ENCODE measurements at regions of chr1 and their contacts with region 1.

Region 1: GRCh38 chr1:235504496-235505222 is 407 bp upstream of the B3GALNT2 start:
- DNase-seq: peak; percentile 97 to 99 (median 98)
- ATAC-seq: peak; percentile 87
- H3K4me3 ChIP-seq: peak overlapping the region; percentile 81 to 85
- H3K4me3 Mint-ChIP-seq: peak overlapping the region; percentile 91
- H3K27ac ChIP-seq: peak overlapping the region; percentile 87 to 89
- H3K27ac Mint-ChIP-seq: peak overlapping the region; percentile 98
- H3K4me1 ChIP-seq: peaks cover 7% of the 10 kb centered on the region
- H3K4me1 Mint-ChIP-seq: peaks cover 26% of the 10 kb centered on the region
- H3K27me3 ChIP-seq: no peaks in the 10 kb centered on the region
- H3K27me3 Mint-ChIP-seq: no peaks in the 10 kb centered on the region
- CTCF ChIP-seq: peak; percentile 91

Region 2: GRCh38 chr1:234373064-234373958 is 1131.3 kb before region 1 on chr1 and contains the start of gene COA6:
- CTCF ChIA-PET with region 1: no interaction called
- POLR2A ChIA-PET with region 1: interaction called, 3 read pairs
- intact Hi-C with region 1: loop called (anchors 5 to 10 kb)
- DNase-seq: peak; percentile 82 to 96 (median 88)
- ATAC-seq: peak; percentile 84
- H3K4me3 ChIP-seq: peak within 1 kb of the TSS; percentile 82 to 97
- H3K4me3 Mint-ChIP-seq: peak within 1 kb of the TSS; percentile 97
- H3K27ac ChIP-seq: peak within 1 kb of the TSS; percentile 88 to 99
- H3K27ac Mint-ChIP-seq: peak within 1 kb of the TSS; percentile 99
- H3K4me1 ChIP-seq: peaks cover 19% of the 10 kb centered on the region
- H3K4me1 Mint-ChIP-seq: peaks cover 49% of the 10 kb centered on the region
- H3K27me3 ChIP-seq: no peaks in the 10 kb centered on the region
- H3K27me3 Mint-ChIP-seq: no peaks in the 10 kb centered on the region
- CTCF ChIP-seq: no peak
- total RNA-seq, gene COA6: 7.2 to 8.9 TPM

Region 3: GRCh38 chr1:234610348-234611152 is 894.1 kb before region 1 on chr1:
- CTCF ChIA-PET with region 1: no interaction called
- POLR2A ChIA-PET with region 1: interaction called, 3 read pairs
- intact Hi-C with region 1: loop called in 1 of 2 experiments (anchors 5 kb)
- DNase-seq: peak; percentile 78 to 98 (median 89)
- ATAC-seq: peak; percentile 42
- H3K4me3 ChIP-seq: peak overlapping the region; percentile 78 to 86
- H3K4me3 Mint-ChIP-seq: peak overlapping the region; percentile 92
- H3K27ac ChIP-seq: peak overlapping the region; percentile 97 to 99
- H3K27ac Mint-ChIP-seq: peak overlapping the region; percentile 98
- H3K4me1 ChIP-seq: peaks cover 46% of the 10 kb centered on the region
- H3K4me1 Mint-ChIP-seq: peaks cover 49% of the 10 kb centered on the region
- H3K27me3 ChIP-seq: no peaks in the 10 kb centered on the region
- H3K27me3 Mint-ChIP-seq: no peaks in the 10 kb centered on the region
- CTCF ChIP-seq: no peak

Region 4: DNA sequence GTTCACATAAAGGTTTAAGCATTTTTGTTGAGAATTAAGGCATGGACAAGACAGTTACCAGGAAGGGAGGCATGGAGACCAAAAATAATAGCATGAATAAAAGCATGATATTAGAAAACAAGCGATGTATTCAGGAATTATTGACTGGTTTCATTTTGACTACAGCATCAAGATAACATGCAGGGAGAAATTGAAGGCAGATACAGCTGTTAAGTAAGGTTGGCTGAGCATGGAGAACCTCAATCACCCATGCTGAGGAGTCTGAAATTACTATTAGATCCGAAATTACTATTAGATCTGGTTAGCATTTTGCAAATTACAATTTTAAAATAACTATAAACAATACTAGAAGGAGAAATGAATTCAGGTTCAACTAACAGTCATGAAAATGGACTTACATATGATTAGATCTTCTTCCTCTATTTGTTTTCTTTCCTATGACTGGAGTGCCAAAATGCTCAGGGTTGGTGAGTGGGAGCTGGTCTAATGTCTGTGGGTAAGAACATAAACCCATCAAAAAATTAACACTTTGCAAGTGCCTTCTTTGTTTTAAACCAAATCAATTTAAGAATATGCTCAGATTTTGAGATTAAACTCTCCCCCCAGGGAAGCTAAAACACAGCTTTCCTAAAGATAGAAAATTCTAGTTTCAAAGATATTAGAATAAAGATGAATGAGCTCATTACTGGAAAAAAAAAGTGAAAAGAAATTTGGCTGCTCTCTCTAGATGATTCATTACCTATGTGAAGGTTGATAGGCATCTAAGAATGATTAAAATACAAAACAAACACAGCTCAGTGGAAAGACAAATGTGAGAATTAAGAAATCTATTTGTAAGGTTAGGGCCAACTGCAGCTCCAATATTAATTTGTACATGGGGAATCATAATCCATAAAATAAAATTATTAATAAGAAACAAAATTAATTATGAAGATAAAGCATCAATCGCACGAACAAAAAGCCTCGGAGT is 258.4 kb before region 1 on chr1:
- CTCF ChIA-PET with region 1: no interaction called
- POLR2A ChIA-PET with region 1: no interaction called
- intact Hi-C with region 1: loop called in 1 of 2 experiments (anchors 5 kb)
- DNase-seq: no peak
- ATAC-seq: no peak
- H3K4me3 ChIP-seq: no peak overlapping the region
- H3K4me3 Mint-ChIP-seq: no peak overlapping the region
- H3K27ac ChIP-seq: no peak overlapping the region
- H3K27ac Mint-ChIP-seq: no peak overlapping the region
- H3K4me1 ChIP-seq: peaks cover 14% of the 10 kb centered on the region
- H3K4me1 Mint-ChIP-seq: peaks cover 42% of the 10 kb centered on the region
- H3K27me3 ChIP-seq: no peaks in the 10 kb centered on the region
- H3K27me3 Mint-ChIP-seq: no peaks in the 10 kb centered on the region
- CTCF ChIP-seq: no peak

Region 5: DNA sequence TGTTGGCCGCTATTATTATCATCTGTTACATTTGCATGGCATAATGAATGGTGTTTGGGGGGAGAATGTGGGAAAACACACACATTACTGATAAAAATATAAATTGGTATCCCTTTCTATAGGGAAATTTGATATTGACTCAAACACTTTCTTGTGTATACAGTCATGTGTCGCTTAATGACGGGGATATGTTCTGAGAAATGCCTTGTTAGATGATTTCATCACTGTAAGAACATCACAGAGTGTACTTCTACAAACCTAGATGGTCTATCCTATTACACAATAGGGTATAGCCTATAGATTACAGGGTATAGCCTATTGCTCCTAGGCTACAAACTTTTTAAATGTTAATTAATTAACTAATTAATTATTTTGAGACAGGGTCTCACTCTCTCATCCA is 66.8 kb after region 1 on chr1:
- CTCF ChIA-PET with region 1: no interaction called
- POLR2A ChIA-PET with region 1: no interaction called
- intact Hi-C with region 1: no loop called
- DNase-seq: no peak
- ATAC-seq: no peak
- H3K4me3 ChIP-seq: no peak overlapping the region
- H3K4me3 Mint-ChIP-seq: no peak overlapping the region
- H3K27ac ChIP-seq: no peak overlapping the region
- H3K27ac Mint-ChIP-seq: no peak overlapping the region
- H3K4me1 ChIP-seq: peaks cover 12% of the 10 kb centered on the region
- H3K4me1 Mint-ChIP-seq: peaks cover 14% of the 10 kb centered on the region
- H3K27me3 ChIP-seq: no peaks in the 10 kb centered on the region
- H3K27me3 Mint-ChIP-seq: no peaks in the 10 kb centered on the region
- CTCF ChIP-seq: no peak

Region 6: GRCh38 chr1:235642011-235642942 is 137.6 kb after region 1 on chr1:
- CTCF ChIA-PET with region 1: no interaction called
- POLR2A ChIA-PET with region 1: no interaction called
- intact Hi-C with region 1: loop called in 1 of 2 experiments (anchors 5 kb)
- DNase-seq: peak; percentile 45 to 91 (median 70)
- ATAC-seq: peak; percentile 82
- H3K4me3 ChIP-seq: peak overlapping the region; percentile 56 to 66
- H3K4me3 Mint-ChIP-seq: peak overlapping the region; percentile 80
- H3K27ac ChIP-seq: peak overlapping the region; percentile 69 to 77
- H3K27ac Mint-ChIP-seq: peak overlapping the region; percentile 92
- H3K4me1 ChIP-seq: peaks cover 16% of the 10 kb centered on the region
- H3K4me1 Mint-ChIP-seq: peaks cover 21% of the 10 kb centered on the region
- H3K27me3 ChIP-seq: no peaks in the 10 kb centered on the region
- H3K27me3 Mint-ChIP-seq: peaks cover 18% of the 10 kb centered on the region
- CTCF ChIP-seq: no peak

Region 7: GRCh38 chr1:236523701-236524141 is 1019.1 kb after region 1 on chr1 and contains the start of gene LGALS8:
- CTCF ChIA-PET with region 1: no interaction called
- POLR2A ChIA-PET with region 1: no interaction called
- intact Hi-C with region 1: loop called in 1 of 2 experiments (anchors 10 kb)
- DNase-seq: peak; percentile 65 to 93 (median 88)
- ATAC-seq: peak; percentile 80
- H3K4me3 ChIP-seq: peak within 1 kb of the TSS; percentile 78 to 95
- H3K4me3 Mint-ChIP-seq: peak within 1 kb of the TSS; percentile 92
- H3K27ac ChIP-seq: peak within 1 kb of the TSS; percentile 84 to 92
- H3K27ac Mint-ChIP-seq: peak within 1 kb of the TSS; percentile 93
- H3K4me1 ChIP-seq: peaks cover 11% of the 10 kb centered on the region
- H3K4me1 Mint-ChIP-seq: peaks cover 32% of the 10 kb centered on the region
- H3K27me3 ChIP-seq: no peaks in the 10 kb centered on the region
- H3K27me3 Mint-ChIP-seq: peaks cover 3% of the 10 kb centered on the region
- CTCF ChIP-seq: no peak
- total RNA-seq, gene LGALS8: 118 to 125 TPM